ENCODE measurements at regions of chr20 and their contacts with region 1.

Region 1: DNA sequence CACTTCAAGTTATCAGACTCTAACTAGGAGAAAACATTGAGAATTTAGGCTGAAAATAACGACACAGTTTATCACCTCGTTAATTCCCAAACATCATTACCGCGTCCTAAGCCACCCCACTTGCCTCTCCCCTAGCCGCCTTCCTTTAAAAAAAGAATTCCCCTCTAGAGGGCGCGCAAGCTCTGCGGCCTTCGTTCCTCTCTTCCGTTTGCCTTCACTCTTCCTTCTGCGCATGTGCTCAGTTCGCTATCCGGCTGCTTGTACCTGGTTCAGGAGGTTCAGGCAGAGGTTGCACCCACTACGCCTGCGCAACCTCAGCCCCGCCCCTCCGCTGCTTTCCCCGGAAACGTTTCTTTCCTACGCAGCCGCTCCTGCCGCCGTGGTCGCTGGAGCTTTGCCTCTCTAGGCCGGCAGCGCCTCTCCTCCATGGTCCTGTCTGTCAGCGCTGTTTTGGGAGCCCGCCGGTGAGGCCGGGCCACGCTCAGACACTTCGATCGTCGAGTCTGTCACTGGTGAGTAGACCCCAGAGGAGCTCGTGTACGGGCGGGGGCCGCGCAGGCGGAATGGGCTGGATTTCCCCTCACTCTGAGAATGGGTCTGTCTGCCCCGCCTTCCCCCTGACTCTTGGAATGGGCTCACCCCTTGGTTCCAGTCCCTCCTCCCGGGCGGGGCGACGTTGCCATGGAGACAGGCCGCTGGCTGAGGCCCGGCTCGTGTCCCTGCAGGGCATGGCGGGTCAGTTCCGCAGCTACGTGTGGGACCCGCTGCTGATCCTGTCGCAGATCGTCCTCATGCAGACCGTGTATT is at the start of gene SYS1:
- DNase-seq: peak; percentile 99
- ATAC-seq: peak; percentile 82
- H3K4me3 ChIP-seq: peak within 1 kb of the TSS; percentile 79 to 88 (median 85)
- H3K4me3 Mint-ChIP-seq: peak within 1 kb of the TSS; percentile 99
- H3K27ac ChIP-seq: peak within 1 kb of the TSS; percentile 86 to 99
- H3K27ac Mint-ChIP-seq: peak within 1 kb of the TSS; percentile 99
- H3K4me1 ChIP-seq: peaks cover 47 to 49% of the 10 kb centered on the region in 2 donors
- H3K4me1 Mint-ChIP-seq: peaks cover 49% of the 10 kb centered on the region
- H3K27me3 ChIP-seq: peaks cover 0 to 5% (median 0%) of the 10 kb centered on the region in 4 experiments
- H3K27me3 Mint-ChIP-seq: no peaks in the 10 kb centered on the region
- CTCF ChIP-seq: peak; percentile 86
- total RNA-seq, gene SYS1: 57.7 and 61.4 TPM in 2 replicates

Region 2: DNA sequence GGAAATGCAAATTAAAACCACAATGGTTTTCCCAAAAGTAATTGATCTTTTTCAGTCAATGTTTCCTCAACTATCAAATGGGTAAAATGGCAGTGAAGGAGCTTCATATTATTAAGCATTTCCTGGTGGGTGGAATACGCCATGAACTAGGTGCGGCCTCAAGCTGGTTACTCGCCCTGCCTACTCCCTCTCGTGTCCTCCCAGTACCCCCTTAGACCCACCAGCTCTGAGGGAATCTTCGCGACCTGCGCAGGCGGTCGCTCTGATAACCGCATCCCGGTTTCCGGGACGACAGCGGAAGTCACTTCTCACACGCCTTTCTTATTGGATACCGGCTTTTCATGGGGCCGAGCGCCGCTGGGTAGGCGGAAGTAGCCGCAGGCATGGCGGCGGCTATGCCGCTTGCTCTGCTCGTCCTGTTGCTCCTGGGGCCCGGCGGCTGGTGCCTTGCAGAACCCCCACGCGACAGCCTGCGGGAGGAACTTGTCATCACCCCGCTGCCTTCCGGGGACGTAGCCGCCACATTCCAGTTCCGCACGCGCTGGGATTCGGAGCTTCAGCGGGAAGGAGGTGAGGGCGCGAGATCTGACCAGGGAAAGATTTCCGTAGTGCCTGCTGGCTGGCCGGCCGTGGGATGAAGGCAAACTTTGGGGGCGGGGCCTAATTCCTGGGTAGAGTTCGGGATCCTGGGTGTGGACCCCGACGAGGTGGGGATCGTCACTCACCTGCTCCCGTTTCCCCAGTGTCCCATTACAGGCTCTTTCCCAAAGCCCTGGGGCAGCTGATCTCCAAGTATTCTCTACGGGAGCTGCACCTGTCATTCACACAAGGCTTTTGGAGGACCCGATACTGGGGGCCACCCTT is 53.0 kb after region 1 on chr20 and contains the start of gene PIGT:
- CTCF ChIA-PET with region 1: interaction called, 32 read pairs
- POLR2A ChIA-PET with region 1: interaction called, 21 read pairs
- intact Hi-C with region 1: loop called (anchors 1 kb)
- DNase-seq: peak; percentile 95
- ATAC-seq: peak; percentile 75
- H3K4me3 ChIP-seq: peak within 1 kb of the TSS; percentile 80 to 97 (median 97)
- H3K4me3 Mint-ChIP-seq: peak within 1 kb of the TSS; percentile 99
- H3K27ac ChIP-seq: peak within 1 kb of the TSS; percentile 81 to 90
- H3K27ac Mint-ChIP-seq: peak within 1 kb of the TSS; percentile 100
- H3K4me1 ChIP-seq: peaks cover 30 to 38% of the 10 kb centered on the region in 2 donors
- H3K4me1 Mint-ChIP-seq: peaks cover 53% of the 10 kb centered on the region
- H3K27me3 ChIP-seq: no peaks in the 10 kb centered on the region
- H3K27me3 Mint-ChIP-seq: no peaks in the 10 kb centered on the region
- CTCF ChIP-seq: no peak
- total RNA-seq, gene PIGT: 106 and 110 TPM in 2 replicates

Region 3: GRCh38 chr20:45487231-45487635 is 124.2 kb after region 1 on chr20:
- CTCF ChIA-PET with region 1: interaction called, 13 read pairs
- POLR2A ChIA-PET with region 1: no interaction called
- intact Hi-C with region 1: no loop called
- DNase-seq: peak; percentile 27
- ATAC-seq: no peak
- H3K4me3 ChIP-seq: no peak overlapping the region
- H3K4me3 Mint-ChIP-seq: no peak overlapping the region
- H3K27ac ChIP-seq: no peak overlapping the region
- H3K27ac Mint-ChIP-seq: no peak overlapping the region
- H3K4me1 ChIP-seq: no peaks in the 10 kb centered on the region
- H3K4me1 Mint-ChIP-seq: no peaks in the 10 kb centered on the region
- H3K27me3 ChIP-seq: peaks cover 0 to 21% (median 5%) of the 10 kb centered on the region in 4 experiments
- H3K27me3 Mint-ChIP-seq: peaks cover 46% of the 10 kb centered on the region
- CTCF ChIP-seq: peak; percentile 30